Cardiac septum (tissue), 1 donor: ENCODE measurements at regions of chr9 and their contacts with region 1.

Region 1: GRCh38 chr9:89549031-89549644 is 51.2 kb upstream of the SEMA4D start:
- DNase-seq: peak; percentile 90

Region 2: DNA sequence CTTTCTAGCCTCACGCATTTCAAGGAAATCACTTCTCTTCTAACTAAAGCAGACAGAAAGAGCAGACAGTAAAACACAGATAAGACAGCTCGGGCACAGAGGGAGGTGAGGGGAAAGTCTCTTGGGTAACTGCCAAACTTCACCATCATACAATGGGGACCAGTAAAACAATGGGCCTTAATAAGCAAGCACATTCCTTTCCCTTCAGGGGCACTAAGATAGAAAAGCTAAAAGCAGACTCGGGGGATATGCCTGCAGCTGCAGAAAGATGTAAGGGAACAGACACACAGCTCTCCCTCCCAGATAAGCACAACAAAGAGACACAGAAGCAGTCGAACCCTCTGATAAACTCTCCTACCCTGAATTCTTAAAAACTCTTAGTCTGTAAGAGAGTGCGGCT is 253.7 kb before region 1 on chr9:
- intact Hi-C with region 1: no loop called
- DNase-seq: no peak

Region 3: DNA sequence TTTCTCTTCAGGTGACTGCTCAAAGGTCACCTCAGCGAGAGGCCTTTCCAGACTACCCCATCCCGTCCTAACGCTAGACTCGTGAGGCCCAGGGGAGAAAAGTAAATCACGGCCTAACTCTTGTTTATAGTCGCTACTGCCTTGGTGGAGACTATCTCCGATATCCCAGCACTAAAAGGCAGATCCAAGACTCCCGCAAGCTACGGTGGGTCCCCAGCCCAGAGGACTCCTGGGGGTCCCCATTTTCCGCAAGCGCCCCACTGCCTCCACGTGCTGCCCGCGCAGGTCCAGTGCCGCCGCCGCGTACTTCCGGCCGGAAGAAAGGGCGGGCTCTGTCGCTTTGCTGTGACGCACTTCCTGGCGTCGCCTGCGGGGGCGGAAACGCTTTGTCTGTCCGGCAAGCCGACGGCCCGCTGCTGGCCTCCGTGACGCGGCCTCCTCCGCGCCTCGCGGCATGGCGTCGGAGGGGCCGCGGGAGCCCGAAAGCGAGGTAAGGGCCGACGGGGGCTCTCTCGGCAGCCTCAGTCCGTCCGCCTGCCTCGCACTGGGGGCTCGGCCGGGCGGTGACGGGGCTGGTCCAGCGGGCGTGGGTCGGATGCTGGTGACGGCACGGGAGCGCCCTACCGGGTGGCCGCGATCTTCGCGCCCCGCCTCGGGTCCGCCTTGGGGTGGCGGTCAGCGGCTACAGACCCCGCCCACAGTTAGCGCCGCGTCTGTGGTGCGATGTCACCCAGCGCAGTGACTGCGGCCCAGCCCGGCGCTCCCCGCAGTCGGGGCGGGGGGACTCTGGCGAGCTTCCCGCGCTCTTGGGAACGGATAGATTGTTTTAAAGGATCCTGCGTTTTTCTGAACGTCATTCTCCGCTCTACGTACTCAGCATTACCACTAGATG is 230.8 kb before region 1 on chr9 and contains the start of gene SECISBP2:
- intact Hi-C with region 1: loop called (anchors 2 kb)
- DNase-seq: peak; percentile 97
- total RNA-seq, gene SECISBP2: 21.2 TPM

Region 4: DNA sequence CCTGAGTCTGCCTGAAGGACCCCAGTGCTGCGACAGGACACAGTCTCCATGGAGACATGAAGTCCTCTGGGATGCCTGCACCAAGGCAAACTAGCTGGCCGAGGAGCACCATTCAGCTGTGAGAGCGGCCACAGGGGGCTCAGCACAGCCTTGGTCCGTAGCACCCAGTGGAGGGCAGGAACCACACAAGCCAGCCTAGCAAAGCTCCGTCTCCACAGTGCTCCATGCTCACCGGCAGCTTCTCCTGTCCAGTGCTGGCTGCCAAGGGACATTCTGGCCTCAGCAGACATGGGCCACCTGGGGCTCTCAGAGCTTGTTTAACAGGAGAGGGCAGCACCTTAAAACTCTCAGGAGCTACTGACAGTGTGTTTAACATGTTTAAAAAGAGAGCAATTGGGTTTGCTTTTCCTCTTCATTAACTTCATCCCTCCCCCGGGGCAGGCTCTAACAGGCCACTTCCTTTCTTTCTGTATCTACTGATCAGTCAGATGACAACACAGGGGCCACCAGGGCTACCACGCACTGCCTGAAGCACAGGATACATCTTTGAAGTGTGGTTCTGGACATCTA is 173.9 kb before region 1 on chr9:
- intact Hi-C with region 1: loop called (anchors 10 kb)
- DNase-seq: no peak